B cell (primary cell): ENCODE measurements at regions of chrX and their contacts with region 1.

Region 1: GRCh38 chrX:154762523-154763289 is at the start of gene DKC1:
- DNase-seq: peak; percentile 96
- ATAC-seq: peak; percentile 87
- H3K4me3 ChIP-seq: peak within 1 kb of the TSS; percentile 55 to 65 (median 63)
- H3K4me3 Mint-ChIP-seq: peak within 1 kb of the TSS; percentile 88
- H3K27ac ChIP-seq: peak within 1 kb of the TSS; percentile 61 to 67
- H3K27ac Mint-ChIP-seq: peak within 1 kb of the TSS; percentile 93
- H3K4me1 ChIP-seq: peaks cover 8 to 13% of the 10 kb centered on the region in 2 donors
- H3K4me1 Mint-ChIP-seq: peaks cover 16% of the 10 kb centered on the region
- H3K27me3 ChIP-seq: no peaks in the 10 kb centered on the region
- H3K27me3 Mint-ChIP-seq: no peaks in the 10 kb centered on the region
- CTCF ChIP-seq: peak; percentile 25
- total RNA-seq, gene DKC1: 73.5 and 84.2 TPM in 2 replicates

Region 2: GRCh38 chrX:154603438-154604430 is 159.0 kb before region 1 on chrX:
- CTCF ChIA-PET with region 1: no interaction called
- POLR2A ChIA-PET with region 1: interaction called, 10 read pairs
- intact Hi-C with region 1: no loop called
- DNase-seq: no peak
- ATAC-seq: no peak
- H3K4me3 ChIP-seq: no peak overlapping the region
- H3K4me3 Mint-ChIP-seq: no peak overlapping the region
- H3K27ac ChIP-seq: no peak overlapping the region
- H3K27ac Mint-ChIP-seq: no peak overlapping the region
- H3K4me1 ChIP-seq: no peaks in the 10 kb centered on the region
- H3K4me1 Mint-ChIP-seq: no peaks in the 10 kb centered on the region
- H3K27me3 ChIP-seq: no peaks in the 10 kb centered on the region
- H3K27me3 Mint-ChIP-seq: no peaks in the 10 kb centered on the region
- CTCF ChIP-seq: no peak

Region 3: GRCh38 chrX:154804957-154805695 is 42.4 kb after region 1 on chrX and contains the start of gene MPP1:
- CTCF ChIA-PET with region 1: no interaction called
- POLR2A ChIA-PET with region 1: no interaction called
- intact Hi-C with region 1: loop called (anchors 1 kb)
- DNase-seq: peak; percentile 82
- ATAC-seq: peak; percentile 100
- H3K4me3 ChIP-seq: peak within 1 kb of the TSS; percentile 49 to 69 (median 65)
- H3K4me3 Mint-ChIP-seq: peak within 1 kb of the TSS; percentile 85
- H3K27ac ChIP-seq: no peak within 1 kb of the TSS
- H3K27ac Mint-ChIP-seq: peak within 1 kb of the TSS; percentile 37
- H3K4me1 ChIP-seq: peaks cover 16 to 21% of the 10 kb centered on the region in 2 donors
- H3K4me1 Mint-ChIP-seq: peaks cover 22% of the 10 kb centered on the region
- H3K27me3 ChIP-seq: no peaks in the 10 kb centered on the region
- H3K27me3 Mint-ChIP-seq: no peaks in the 10 kb centered on the region
- CTCF ChIP-seq: no peak
- total RNA-seq, gene MPP1: 7.2 and 7.7 TPM in 2 replicates